ENCODE measurements at regions of chr2 and their contacts with region 1.

Region 1: DNA sequence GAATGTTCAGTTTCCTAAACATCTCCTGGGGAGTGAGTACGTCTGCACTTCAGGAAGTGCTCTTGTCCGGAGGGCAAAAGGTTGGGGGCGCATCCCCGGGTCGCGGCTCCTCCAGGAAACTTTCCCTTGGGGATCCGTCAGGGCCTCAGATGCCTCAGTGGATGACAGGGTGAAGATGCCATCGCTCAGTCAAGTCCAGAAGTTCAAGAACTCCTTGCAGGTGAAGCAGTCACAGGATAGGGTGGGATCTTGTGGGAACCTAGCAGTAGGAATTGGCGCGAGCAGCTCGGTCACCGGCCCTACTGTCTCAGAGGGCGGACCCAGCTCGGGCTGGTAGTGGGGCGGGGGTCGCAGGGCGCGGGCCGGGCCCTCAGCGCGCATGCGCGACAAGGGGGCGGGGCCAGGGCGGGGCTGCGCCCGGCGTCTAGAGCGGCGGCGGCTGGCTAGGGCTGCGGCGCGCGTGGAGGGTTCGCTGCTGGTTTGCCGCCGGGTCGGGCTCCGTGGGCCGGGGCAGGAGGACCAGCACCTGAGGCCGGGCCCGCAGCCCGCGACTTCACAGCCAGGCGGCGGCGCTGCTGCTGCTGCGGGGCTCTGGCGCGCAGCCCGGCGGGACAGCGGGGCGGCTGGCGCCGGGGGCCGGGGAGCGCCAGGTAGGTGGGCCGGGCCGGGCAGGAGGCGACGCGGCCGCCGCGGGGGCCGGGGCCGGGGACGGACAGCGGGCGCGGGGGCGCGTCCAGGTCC is at the start of gene INPP4A:
- DNase-seq: no peak
- H3K4me3 ChIP-seq: peak within 1 kb of the TSS; percentile 63 to 91 (median 83)
- H3K27ac ChIP-seq: peak within 1 kb of the TSS; percentile 82 to 88 (median 83)
- H3K4me1 ChIP-seq: peaks cover 12 to 51% (median 30%) of the 10 kb centered on the region in 4 donors
- H3K27me3 ChIP-seq: no peaks in the 10 kb centered on the region
- CTCF ChIP-seq: peak; percentile 15 to 49 (median 36)
- EP300 ChIP-seq: no peak
- POLR2A ChIP-seq: no peak
- total RNA-seq, gene INPP4A: 30.7 to 58.9 (median 39.4) TPM

Region 2: GRCh38 chr2:98324181-98324580 is 120.4 kb before region 1 on chr2:
- intact Hi-C with region 1: no loop called
- DNase-seq: peak; percentile 17
- H3K4me3 ChIP-seq: no peak overlapping the region
- H3K27ac ChIP-seq: no peak overlapping the region
- H3K4me1 ChIP-seq: no peaks in the 10 kb centered on the region
- H3K27me3 ChIP-seq: no peaks in the 10 kb centered on the region
- CTCF ChIP-seq: no peak
- EP300 ChIP-seq: no peak
- POLR2A ChIP-seq: no peak

Region 3: GRCh38 chr2:98541906-98542305 is 97.3 kb after region 1 on chr2:
- intact Hi-C with region 1: no loop called
- DNase-seq: peak; percentile 62
- H3K4me3 ChIP-seq: no peak overlapping the region
- H3K27ac ChIP-seq: no peak overlapping the region
- H3K4me1 ChIP-seq: no peaks in the 10 kb centered on the region
- H3K27me3 ChIP-seq: no peaks in the 10 kb centered on the region
- CTCF ChIP-seq: no peak
- EP300 ChIP-seq: no peak
- POLR2A ChIP-seq: no peak

Region 4: GRCh38 chr2:98568881-98569793 is 124.5 kb after region 1 on chr2:
- intact Hi-C with region 1: loop called (anchors 10 kb)
- DNase-seq: no peak
- H3K4me3 ChIP-seq: no peak overlapping the region
- H3K27ac ChIP-seq: no peak overlapping the region
- H3K4me1 ChIP-seq: peaks cover 0 to 6% (median 0%) of the 10 kb centered on the region in 4 donors
- H3K27me3 ChIP-seq: no peaks in the 10 kb centered on the region
- CTCF ChIP-seq: peak; percentile 60 to 86 (median 68)
- EP300 ChIP-seq: no peak
- POLR2A ChIP-seq: no peak

Region 5: GRCh38 chr2:98608116-98608999 is 163.8 kb after region 1 on chr2 and contains the starts of genes COA5 and UNC50:
- intact Hi-C with region 1: loop called (anchors 10 kb)
- DNase-seq: peak; percentile 97
- H3K4me3 ChIP-seq: peak within 1 kb of the TSS; percentile 72 to 98 (median 94)
- H3K27ac ChIP-seq: peak within 1 kb of the TSS; percentile 96 to 98 (median 98)
- H3K4me1 ChIP-seq: peaks cover 47 to 73% (median 61%) of the 10 kb centered on the region in 4 donors
- H3K27me3 ChIP-seq: peaks cover 0 to 4% (median 0%) of the 10 kb centered on the region in 4 donors
- CTCF ChIP-seq: no peak
- EP300 ChIP-seq: no peak
- POLR2A ChIP-seq: peak; percentile 84
- total RNA-seq, gene COA5: 28.3 to 48.2 (median 31.7) TPM
- total RNA-seq, gene UNC50: 34.0 to 51.4 (median 40.7) TPM

Region 6: DNA sequence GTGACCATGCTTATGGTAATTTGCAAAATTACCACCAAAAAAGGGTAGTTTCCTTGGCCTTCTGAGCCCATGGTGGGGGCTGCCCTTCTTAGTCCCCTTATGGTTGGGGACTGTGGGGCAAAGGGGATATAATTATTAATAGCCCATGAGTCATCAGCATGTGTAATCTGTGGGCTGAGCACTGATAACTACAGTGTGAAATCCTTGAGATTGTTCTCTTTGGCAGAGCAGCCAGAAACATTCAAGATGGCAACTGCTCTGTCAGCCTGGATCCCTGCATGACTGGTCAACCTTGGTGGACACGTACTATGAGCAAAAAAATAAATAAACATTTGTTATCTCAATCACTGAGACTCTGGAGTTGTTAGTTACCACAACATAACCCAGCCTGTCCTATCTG is 225.1 kb after region 1 on chr2:
- intact Hi-C with region 1: no loop called
- DNase-seq: no peak
- H3K4me3 ChIP-seq: no peak overlapping the region
- H3K27ac ChIP-seq: no peak overlapping the region
- H3K4me1 ChIP-seq: peaks cover 0 to 6% (median 0%) of the 10 kb centered on the region in 4 donors
- H3K27me3 ChIP-seq: no peaks in the 10 kb centered on the region
- CTCF ChIP-seq: no peak
- EP300 ChIP-seq: no peak
- POLR2A ChIP-seq: no peak

Region 7: GRCh38 chr2:98822301-98823164 is 377.9 kb after region 1 on chr2:
- intact Hi-C with region 1: no loop called
- DNase-seq: peak; percentile 90
- H3K4me3 ChIP-seq: peak overlapping the region; percentile 55 to 64 (median 58)
- H3K27ac ChIP-seq: peak overlapping the region; percentile 66 to 81 (median 74)
- H3K4me1 ChIP-seq: peaks cover 19 to 33% (median 25%) of the 10 kb centered on the region in 4 donors
- H3K27me3 ChIP-seq: peaks cover 0 to 29% (median 13%) of the 10 kb centered on the region in 4 donors
- CTCF ChIP-seq: peak in 2 of 3 experiments; percentile 25 to 34
- EP300 ChIP-seq: no peak
- POLR2A ChIP-seq: no peak

Measured in esophagus muscularis mucosa (tissue), 4 donors.